HEK293T (cell line): ENCODE measurements at regions of chr18 and their contacts with region 1.

Region 1: DNA sequence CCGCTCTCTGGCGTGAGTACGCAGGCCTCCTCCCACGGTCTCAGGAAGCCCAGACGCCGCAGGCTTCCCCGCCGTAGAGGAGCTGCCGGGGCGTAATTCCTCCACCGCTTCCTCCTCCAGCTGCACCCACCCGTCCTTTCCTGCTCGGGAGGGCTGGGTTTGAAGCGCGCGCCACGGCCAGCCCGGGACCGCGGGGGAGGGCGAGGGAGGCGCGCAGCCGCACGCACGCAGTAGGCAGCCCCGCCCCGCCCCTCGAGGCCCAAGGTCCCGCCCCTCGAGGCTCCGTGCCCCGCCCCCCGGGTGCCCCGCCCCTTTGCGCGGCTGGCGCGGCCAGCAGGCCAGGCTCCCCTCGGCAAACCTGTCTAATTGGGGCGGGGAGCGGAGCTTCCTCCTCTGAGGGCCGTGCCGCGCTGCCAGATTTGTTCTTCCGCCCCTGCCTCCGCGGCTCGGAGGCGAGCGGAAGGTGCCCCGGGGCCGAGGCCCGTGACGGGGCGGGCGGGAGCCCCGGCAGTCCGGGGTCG is at the start of gene MALT1:
- DNase-seq: peak; percentile 88

Region 2: GRCh38 chr18:58310517-58310916 is 360.7 kb before region 1 on chr18:
- CTCF ChIA-PET with region 1: no interaction called
- POLR2A ChIA-PET with region 1: no interaction called
- DNase-seq: no peak

Region 3: DNA sequence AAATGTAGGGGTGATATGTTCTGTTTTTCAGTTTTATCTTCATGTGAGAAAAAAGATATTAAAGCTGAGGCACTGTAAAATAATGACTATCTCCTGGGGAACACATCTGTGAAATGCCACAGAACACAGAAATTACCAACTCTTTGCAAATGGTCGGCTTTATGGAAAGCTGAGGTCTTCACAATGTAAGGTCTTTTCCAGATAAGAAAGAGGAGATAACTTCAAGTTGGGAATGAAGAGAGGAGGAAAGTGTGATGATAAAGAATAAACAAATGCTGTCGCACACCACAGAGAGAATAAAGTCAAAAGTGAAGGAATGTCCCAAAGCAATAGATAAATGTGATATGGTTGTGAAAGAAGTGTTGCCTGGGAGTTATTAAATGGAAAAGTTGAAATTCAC is 41.1 kb before region 1 on chr18:
- CTCF ChIA-PET with region 1: no interaction called
- POLR2A ChIA-PET with region 1: interaction called, 11 read pairs
- DNase-seq: no peak

Region 4: GRCh38 chr18:58682429-58683069 is 11.4 kb after region 1 on chr18:
- CTCF ChIA-PET with region 1: no interaction called
- POLR2A ChIA-PET with region 1: interaction called, 16 read pairs
- DNase-seq: peak; percentile 13

Region 5: GRCh38 chr18:58947136-58947732 is 276.1 kb after region 1 on chr18:
- CTCF ChIA-PET with region 1: no interaction called
- POLR2A ChIA-PET with region 1: no interaction called
- DNase-seq: no peak